Cardiac septum (tissue), 1 donor: ENCODE measurements at regions of chr7 and their contacts with region 1.

Region 1: GRCh38 chr7:82810558-82811259 is 352.0 kb downstream of the PCLO start:
- DNase-seq: no peak

Region 2: GRCh38 chr7:82578430-82578829 is 232.3 kb before region 1 on chr7:
- intact Hi-C with region 1: no loop called
- DNase-seq: no peak

Region 3: DNA sequence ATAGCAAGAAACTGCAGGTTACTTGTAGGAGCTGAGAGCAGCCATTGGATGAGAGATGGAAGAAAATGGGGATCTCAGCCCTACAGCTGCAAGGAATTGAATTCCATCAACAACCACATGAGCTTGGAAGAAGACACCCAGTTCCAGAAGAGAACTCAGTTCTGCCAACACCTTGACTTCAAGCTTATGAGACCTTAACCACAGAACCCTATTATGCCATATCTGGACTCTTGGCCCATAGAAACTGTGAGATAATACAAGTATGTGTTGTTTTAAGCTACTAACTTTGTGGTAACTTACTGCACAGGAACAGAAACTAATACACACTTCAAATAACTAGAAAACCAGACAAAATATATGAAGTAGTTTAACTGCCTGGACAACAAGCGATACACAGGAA is 154.7 kb before region 1 on chr7:
- intact Hi-C with region 1: no loop called
- DNase-seq: no peak

Region 4: GRCh38 chr7:83271212-83272099 is 460.7 kb after region 1 on chr7:
- intact Hi-C with region 1: loop called (anchors 10 kb)
- DNase-seq: no peak